ENCODE measurements at regions of chr2 and their contacts with region 1.

Region 1: GRCh38 chr2:152247344-152247710 is 71.8 kb upstream of the STAM2 start:
- DNase-seq: peak; percentile 85
- ATAC-seq: peak; percentile 100
- H3K4me3 ChIP-seq: no peak overlapping the region
- H3K27ac ChIP-seq: peak overlapping the region; percentile 76
- H3K4me1 ChIP-seq: peaks cover 10% of the 10 kb centered on the region
- H3K27me3 ChIP-seq: no peaks in the 10 kb centered on the region
- CTCF ChIP-seq: no peak

Region 2: DNA sequence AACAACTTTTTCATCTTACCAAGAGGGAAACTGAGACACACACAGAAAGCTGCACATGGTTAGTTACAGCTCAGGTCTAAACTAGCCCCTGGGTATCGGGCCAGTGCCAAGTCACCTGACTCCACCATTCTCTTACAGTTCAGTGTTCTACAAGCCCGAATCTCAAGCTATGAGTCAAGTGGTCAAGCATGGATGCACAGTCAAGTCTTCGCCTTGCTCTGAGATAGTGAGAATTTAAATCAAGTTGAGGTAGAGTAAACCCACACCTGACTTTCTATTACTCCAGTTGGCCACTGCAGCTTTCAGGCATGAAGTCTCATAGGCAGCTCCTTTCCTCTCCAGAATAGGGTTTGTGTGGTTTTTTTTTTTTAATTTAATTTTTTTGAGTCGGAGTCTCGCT is 384.6 kb before region 1 on chr2:
- CTCF ChIA-PET with region 1: no interaction called
- POLR2A ChIA-PET with region 1: no interaction called
- intact Hi-C with region 1: no loop called
- DNase-seq: no peak
- ATAC-seq: no peak
- H3K4me3 ChIP-seq: no peak overlapping the region
- H3K27ac ChIP-seq: no peak overlapping the region
- H3K4me1 ChIP-seq: no peaks in the 10 kb centered on the region
- H3K27me3 ChIP-seq: peaks cover 61% of the 10 kb centered on the region
- CTCF ChIP-seq: no peak

Region 3: DNA sequence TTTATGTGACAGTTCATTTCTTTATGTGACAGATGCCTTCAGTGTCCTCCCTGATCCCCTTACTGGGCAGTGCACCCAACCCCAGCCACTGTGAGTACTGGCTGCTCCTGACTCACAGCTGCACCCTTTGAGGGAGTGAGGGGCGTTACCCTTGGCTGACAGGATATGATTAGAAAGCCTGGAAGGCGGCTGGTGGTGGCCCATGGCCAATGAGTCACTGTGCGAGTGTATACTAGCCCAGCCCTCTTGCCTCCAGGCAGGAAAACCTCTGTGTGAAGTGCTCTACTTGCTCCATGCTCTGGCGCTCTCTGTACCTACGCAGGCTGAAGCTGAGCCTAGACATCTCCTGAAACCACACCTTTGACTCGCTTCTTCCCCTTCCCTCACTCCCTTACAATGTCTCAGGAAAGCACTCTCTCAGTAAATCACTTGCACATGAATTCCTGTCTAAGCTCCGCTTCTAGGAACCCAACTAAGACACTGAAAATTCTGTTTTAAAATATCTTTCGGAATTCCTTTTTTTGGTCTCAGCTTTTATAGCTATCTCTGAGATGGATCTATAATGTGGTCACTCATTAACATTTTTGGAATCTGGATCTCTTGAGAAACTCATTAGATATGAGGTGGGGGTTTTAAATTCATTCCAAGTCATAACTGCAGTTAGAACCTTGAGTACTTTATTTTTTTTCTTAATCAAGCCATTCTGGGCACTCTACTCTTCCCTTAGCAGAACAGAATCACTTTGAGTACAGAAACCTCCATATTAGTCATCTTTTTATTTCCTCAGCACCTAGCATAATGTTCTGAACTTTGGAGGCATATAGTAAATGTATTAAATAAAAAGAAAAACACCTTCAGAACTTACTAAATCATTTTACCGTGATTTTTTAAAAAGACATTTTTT is 46.5 kb before region 1 on chr2:
- CTCF ChIA-PET with region 1: no interaction called
- POLR2A ChIA-PET with region 1: no interaction called
- intact Hi-C with region 1: loop called (anchors 5 kb)
- DNase-seq: peak; percentile 100
- ATAC-seq: peak; percentile 99
- H3K4me3 ChIP-seq: peak overlapping the region; percentile 55
- H3K27ac ChIP-seq: peak overlapping the region; percentile 94
- H3K4me1 ChIP-seq: peaks cover 19% of the 10 kb centered on the region
- H3K27me3 ChIP-seq: no peaks in the 10 kb centered on the region
- CTCF ChIP-seq: no peak

Region 4: DNA sequence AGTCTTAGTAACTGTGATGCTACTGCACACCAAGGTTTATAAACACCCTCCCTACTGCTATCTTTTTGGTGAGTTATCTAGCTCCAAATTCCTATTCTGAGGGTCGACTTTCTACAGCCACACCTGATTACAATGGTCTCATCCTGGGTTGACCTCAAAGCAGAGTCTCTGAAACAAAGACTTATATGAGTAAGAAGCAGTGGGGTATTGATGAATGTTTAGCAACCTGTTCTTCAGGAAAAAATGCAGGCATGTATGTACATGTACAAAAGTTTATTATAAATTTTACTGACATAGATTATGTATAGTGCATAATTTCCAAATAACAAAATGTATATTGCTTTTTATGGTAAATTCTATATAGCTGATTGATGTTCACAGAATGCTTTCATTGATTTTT is 36.1 kb after region 1 on chr2:
- CTCF ChIA-PET with region 1: no interaction called
- POLR2A ChIA-PET with region 1: no interaction called
- intact Hi-C with region 1: loop called (anchors 1 kb)
- DNase-seq: no peak
- ATAC-seq: no peak
- H3K4me3 ChIP-seq: no peak overlapping the region
- H3K27ac ChIP-seq: no peak overlapping the region
- H3K4me1 ChIP-seq: no peaks in the 10 kb centered on the region
- H3K27me3 ChIP-seq: no peaks in the 10 kb centered on the region
- CTCF ChIP-seq: no peak